Right cardiac atrium (tissue), 5 donors: ENCODE measurements at regions of chr3 and their contacts with region 1.

Region 1: DNA sequence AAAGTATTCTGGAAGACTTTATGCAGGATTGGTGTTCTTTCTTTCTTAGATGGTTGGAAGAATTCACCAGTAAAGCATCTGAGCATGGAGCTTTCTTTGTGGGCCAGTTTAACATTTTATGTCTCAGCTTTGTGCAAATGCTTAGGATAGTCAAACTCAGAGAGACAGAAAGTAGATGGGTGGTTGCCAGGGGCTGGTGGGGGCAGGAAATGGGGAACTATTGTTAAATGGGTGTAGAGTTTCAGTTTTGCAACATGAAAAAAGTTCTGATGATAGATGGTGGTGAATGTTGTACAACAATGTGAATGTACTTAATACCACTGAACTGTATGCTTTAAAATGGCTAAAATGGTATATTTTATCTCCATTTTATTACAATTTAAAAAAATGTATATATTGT is 24.8 kb downstream of the SPCS1 start:
- DNase-seq: no peak
- ATAC-seq: no peak
- H3K4me3 ChIP-seq: no peak overlapping the region
- H3K27ac ChIP-seq: no peak overlapping the region
- H3K4me1 ChIP-seq: no peaks in the 10 kb centered on the region
- H3K27me3 ChIP-seq: no peaks in the 10 kb centered on the region

Region 2: GRCh38 chr3:52787672-52788625 is 57.3 kb after region 1 on chr3:
- intact Hi-C with region 1: no loop called
- DNase-seq: peak in 2 of 3 donors; percentile 31 to 57
- ATAC-seq: peak; percentile 20
- H3K4me3 ChIP-seq: no peak overlapping the region
- H3K27ac ChIP-seq: no peak overlapping the region
- H3K4me1 ChIP-seq: no peaks in the 10 kb centered on the region
- H3K27me3 ChIP-seq: no peaks in the 10 kb centered on the region

Region 3: DNA sequence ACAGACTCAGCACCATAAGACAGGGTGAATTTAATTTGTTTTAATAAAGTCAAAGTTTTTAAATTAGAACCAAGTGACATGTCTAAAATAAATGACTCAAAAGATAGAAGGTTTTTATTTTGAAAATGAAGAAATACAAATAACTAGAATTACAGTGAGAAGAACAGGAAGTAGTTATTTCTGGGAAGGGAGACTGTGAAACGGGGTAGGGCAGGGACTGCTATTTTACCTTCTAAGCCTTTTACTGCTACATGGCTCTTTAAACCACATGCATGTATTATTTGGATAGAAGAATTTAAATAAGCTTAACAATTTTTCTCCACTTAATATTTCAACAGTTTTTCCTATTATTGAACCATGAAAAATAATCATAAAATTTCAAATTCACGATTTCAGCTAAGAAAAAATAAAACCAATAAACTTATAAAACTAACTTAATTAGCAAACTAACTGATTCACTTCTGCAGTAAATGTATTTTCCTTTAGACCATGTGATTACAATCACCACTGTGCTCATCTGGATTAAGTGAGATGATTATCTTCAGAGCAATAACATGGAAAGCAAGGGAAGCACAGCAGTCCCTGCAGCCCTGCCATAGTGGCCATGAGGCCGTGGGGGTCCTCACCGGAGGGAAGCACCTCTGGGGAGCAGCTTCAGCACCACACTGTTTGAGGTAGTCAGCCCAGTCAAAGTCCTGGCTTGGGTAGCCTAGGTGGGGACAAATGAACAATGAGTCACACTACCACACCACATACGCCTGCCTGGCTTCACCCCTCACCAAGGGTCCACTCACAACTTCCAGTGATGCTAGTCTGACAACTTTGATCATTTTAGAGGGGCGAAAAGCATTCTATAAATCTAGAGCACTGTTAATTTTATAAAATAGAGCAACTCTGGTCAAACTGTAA is 195.0 kb after region 1 on chr3:
- intact Hi-C with region 1: loop called in 1 of 4 experiments (anchors 10 kb)
- DNase-seq: no peak
- ATAC-seq: no peak
- H3K4me3 ChIP-seq: no peak overlapping the region
- H3K27ac ChIP-seq: no peak overlapping the region
- H3K4me1 ChIP-seq: no peaks in the 10 kb centered on the region
- H3K27me3 ChIP-seq: no peaks in the 10 kb centered on the region

Region 4: GRCh38 chr3:52973806-52974205 is 243.1 kb after region 1 on chr3:
- intact Hi-C with region 1: no loop called
- DNase-seq: no peak
- ATAC-seq: no peak
- H3K4me3 ChIP-seq: no peak overlapping the region
- H3K27ac ChIP-seq: no peak overlapping the region
- H3K4me1 ChIP-seq: peaks cover 3% of the 10 kb centered on the region
- H3K27me3 ChIP-seq: no peaks in the 10 kb centered on the region